RWPE1 (cell line): ENCODE measurements at regions of chr15 and their contacts with region 1.

Region 1: DNA sequence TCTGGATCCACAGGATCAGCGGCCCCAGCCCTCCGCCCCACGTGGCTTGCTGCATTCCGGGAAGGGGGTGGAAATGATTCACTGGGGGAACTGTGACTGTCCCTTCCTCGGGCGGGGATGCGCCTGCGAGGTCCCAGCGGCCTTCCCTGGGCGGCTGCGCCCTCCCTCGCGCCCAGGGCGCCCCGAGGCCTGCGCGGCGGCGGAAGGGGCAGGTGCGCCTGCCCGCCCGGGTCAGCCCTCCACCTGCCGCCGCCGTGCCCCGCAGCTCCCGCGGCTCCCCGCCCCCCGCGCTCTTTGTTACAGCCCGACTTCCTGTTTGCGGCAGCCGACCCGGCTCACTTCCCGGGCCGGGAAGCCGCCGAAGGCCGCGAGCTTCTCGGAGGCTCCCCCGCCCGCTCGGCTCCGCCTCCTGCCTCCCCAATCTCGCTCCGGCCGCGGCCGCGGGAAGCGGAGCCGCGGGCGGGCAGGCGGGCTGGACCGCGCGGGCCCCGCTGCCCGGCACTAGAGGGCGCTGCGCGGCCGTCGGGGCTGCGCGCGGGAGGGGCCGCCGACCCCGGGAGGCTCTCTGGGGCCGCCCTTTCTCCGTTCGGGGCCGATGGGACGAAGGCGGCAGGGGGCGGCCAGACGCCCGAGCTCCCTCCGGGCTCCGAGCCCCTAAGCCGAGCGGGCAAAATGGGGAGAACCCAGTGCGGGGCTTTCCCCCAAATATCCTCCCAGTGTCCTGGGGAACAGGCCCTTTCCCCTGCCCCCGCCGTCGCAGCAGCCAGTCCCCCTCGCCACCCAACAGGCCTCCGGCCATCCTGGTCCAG is 11.5 kb upstream of the CHAC1 start:
- DNase-seq: peak; percentile 80
- H3K27ac ChIP-seq: peak overlapping the region; percentile 39
- CTCF ChIP-seq: peak; percentile 99

Region 2: DNA sequence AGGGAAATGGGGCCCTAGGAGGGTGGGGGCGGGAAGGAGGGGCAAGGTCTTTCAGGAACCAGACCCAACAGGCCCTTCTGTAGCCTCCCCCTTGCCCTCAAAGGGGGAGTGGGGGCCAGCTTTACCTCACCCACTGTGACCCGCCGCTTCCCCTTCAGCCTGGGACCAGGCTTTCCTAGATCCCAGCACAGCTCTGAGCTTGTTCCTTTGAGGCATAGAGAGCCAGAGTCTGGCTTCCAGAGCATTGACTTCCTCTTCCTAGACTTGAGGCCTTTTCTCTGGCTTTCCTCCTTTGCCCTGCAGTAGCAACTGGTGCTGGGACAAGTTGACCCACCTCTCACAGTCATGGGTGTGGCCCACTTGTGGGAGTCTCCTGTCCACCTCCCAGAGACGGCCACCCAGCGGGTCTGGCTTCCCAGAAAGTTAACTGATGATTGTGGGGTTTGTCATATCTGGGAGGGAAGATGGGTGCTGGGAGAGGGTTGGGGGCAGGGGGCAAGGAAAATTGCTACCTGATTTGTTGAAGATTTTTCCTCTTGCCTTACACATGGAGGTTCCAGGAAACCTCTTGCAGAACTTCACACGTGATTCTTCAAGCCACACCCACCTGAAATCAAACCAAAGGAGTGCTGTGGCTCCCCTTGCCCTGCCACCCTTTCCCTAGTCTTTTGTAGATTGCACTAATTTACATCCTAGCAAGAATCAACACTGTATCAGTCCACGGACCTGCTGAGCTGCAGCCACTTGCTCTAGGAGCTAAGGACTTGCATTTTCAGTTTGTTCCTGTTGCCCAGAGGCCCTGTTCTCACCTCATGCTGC is 475.1 kb before region 1 on chr15:
- CTCF ChIA-PET with region 1: no interaction called
- POLR2A ChIA-PET with region 1: no interaction called
- DNase-seq: no peak
- H3K27ac ChIP-seq: peak overlapping the region; percentile 39
- CTCF ChIP-seq: no peak

Region 3: DNA sequence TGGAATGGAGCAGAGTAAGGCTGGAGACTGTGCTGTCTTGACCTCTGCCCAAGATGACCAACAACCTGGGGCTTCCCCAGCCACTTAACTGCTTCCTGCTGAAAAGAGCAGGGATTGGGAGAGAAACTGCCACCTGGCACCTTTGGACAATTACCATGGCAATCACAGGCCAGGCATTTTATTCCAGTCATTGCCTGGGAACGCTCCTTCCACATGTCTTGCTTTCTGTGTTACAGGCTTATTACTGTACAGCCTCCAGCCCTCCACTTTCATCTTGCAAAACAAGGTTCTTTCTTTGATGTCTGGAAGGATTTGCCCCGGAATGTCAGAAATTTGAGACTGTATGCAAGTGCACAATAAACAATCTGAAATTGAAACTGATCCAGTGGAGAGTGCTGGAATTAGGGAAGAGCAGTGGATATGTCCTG is 116.1 kb before region 1 on chr15:
- CTCF ChIA-PET with region 1: no interaction called
- POLR2A ChIA-PET with region 1: no interaction called
- DNase-seq: no peak
- H3K27ac ChIP-seq: no peak overlapping the region
- CTCF ChIP-seq: no peak

Region 4: DNA sequence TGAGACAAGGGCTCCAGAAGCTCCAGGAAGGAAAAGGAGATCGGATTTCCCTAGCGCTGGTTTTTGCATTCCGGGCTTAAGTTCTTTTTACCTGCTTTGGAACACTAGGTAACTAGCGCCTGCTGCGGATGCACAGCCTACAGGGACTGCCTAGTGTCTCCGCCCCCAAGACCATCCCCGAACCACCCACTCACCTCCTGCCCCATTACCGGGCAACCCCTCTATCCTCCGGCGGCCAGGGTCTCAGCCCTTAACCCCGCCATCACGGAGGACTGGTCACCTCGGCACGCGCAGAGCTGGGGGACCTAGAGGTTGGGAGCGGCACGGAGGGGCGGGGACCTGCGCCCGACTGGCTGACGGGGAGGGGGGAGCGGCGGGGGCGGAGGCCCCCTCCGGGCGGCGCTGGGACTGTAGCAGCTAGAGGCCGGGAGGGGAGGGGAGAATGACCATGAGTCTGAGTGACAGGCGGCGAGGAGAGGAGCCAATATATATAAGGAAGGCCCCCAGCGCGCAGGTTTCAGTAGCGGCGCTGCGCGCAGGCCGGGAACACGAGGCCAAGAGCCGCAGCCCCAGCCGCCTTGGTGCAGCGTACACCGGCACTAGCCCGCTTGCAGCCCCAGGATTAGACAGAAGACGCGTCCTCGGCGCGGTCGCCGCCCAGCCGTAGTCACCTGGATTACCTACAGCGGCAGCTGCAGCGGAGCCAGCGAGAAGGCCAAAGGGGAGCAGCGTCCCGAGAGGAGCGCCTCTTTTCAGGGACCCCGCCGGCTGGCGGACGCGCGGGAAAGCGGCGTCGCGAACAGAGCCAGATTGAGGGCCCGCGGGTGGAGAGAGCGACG is 12.7 kb before region 1 on chr15 and contains the start of gene DLL4:
- CTCF ChIA-PET with region 1: interaction called, 19 read pairs
- POLR2A ChIA-PET with region 1: interaction called, 3 read pairs
- DNase-seq: peak; percentile 70
- H3K27ac ChIP-seq: no peak within 1 kb of the TSS
- CTCF ChIP-seq: no peak

Region 5: DNA sequence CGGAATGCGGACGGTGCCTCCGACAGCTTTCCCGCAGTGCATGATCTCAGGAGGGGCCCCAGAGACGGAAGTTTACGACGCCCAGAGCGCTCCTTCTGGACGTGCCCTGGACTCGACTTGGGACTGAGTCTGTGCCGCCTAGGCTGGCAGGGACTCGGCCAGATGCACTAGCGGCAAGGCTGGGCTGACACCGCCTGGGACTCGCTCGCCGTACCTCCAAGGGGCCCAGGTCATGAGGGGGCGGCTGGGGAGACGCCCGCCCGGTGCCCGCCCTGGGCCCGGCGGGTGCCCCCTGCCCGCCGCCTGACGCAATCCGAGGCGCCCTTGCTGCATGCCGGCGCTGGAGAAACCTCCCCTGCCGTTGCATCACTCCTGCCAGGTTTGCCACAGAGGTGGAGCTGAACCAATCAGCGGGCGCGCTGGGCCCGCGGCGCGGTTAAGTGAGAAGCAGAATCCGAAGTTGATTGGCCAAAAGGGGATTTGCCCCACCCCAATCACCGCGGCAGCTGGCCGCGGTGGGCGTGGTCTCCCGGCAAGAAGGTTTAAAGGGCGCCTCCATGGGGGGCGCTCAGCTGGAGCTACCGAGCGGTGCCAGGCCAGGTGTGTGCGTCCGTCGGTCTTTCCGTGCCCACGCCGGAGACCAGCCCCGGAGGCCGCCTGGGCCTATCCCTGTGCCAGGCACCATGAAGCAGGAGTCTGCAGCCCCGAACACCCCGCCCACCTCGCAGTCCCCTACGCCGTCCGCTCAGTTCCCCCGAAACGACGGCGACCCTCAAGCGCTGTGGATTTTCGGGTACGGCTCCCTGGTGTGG is 11.4 kb after region 1 on chr15 and contains the start of gene CHAC1:
- CTCF ChIA-PET with region 1: interaction called, 30 read pairs
- POLR2A ChIA-PET with region 1: interaction called, 5 read pairs
- DNase-seq: peak; percentile 100
- H3K27ac ChIP-seq: peak within 1 kb of the TSS; percentile 84
- CTCF ChIP-seq: no peak

Region 6: GRCh38 chr15:41022487-41023090 is 80.9 kb after region 1 on chr15:
- CTCF ChIA-PET with region 1: interaction called, 10 read pairs
- POLR2A ChIA-PET with region 1: interaction called, 3 read pairs
- DNase-seq: peak; percentile 50
- H3K27ac ChIP-seq: no peak overlapping the region
- CTCF ChIP-seq: peak; percentile 75